IMR-90 (cell line): ENCODE measurements at regions of chr15 and their contacts with region 1.

Region 1: GRCh38 chr15:29589406-29589805 is 232.9 kb downstream of the TJP1 start:
- DNase-seq: no peak
- ATAC-seq: no peak
- H3K4me3 ChIP-seq: no peak overlapping the region
- H3K27ac ChIP-seq: no peak overlapping the region
- H3K4me1 ChIP-seq: no peaks in the 10 kb centered on the region
- H3K27me3 ChIP-seq: peaks cover 20% of the 10 kb centered on the region
- CTCF ChIP-seq: no peak
- POLR2A ChIP-seq: no peak
- RAD21 ChIP-seq: no peak

Region 2: DNA sequence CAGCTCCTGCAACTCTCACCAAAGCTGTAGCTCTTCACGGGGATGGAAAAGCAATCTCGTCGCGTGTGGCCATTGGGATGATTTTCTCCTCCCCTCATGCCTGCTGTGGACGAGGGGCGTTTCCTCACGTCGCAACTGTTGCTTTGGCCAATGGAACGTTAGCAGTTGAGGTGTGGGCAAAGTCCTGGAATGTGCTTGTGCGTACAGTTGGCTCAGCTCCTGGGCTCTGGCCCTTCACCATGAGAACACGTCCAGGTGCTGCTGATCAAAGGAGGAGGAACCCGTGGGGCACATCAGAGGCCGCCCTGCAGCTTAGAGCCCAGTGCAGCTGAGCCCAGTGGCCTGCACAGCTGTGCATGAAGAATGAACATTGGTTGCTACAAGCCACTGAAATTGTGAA is 46.7 kb after region 1 on chr15:
- CTCF ChIA-PET with region 1: no interaction called
- POLR2A ChIA-PET with region 1: no interaction called
- dilution Hi-C with region 1: no loop called
- in situ Hi-C with region 1: loop called (anchors 5 kb)
- intact Hi-C with region 1: loop called (anchors 10 kb)
- DNase-seq: no peak
- ATAC-seq: no peak
- H3K4me3 ChIP-seq: no peak overlapping the region
- H3K27ac ChIP-seq: no peak overlapping the region
- H3K4me1 ChIP-seq: no peaks in the 10 kb centered on the region
- H3K27me3 ChIP-seq: peaks cover 8% of the 10 kb centered on the region
- CTCF ChIP-seq: no peak
- POLR2A ChIP-seq: no peak
- RAD21 ChIP-seq: no peak

Region 3: GRCh38 chr15:29645841-29646240 is 56.4 kb after region 1 on chr15:
- CTCF ChIA-PET with region 1: no interaction called
- POLR2A ChIA-PET with region 1: no interaction called
- dilution Hi-C with region 1: no loop called
- in situ Hi-C with region 1: no loop called
- intact Hi-C with region 1: loop called (anchors 10 kb)
- DNase-seq: no peak
- ATAC-seq: no peak
- H3K4me3 ChIP-seq: no peak overlapping the region
- H3K27ac ChIP-seq: no peak overlapping the region
- H3K4me1 ChIP-seq: no peaks in the 10 kb centered on the region
- H3K27me3 ChIP-seq: no peaks in the 10 kb centered on the region
- CTCF ChIP-seq: no peak
- POLR2A ChIP-seq: no peak
- RAD21 ChIP-seq: no peak

Region 4: GRCh38 chr15:29704950-29705597 is 115.7 kb after region 1 on chr15:
- CTCF ChIA-PET with region 1: no interaction called
- POLR2A ChIA-PET with region 1: no interaction called
- dilution Hi-C with region 1: no loop called
- in situ Hi-C with region 1: no loop called
- intact Hi-C with region 1: no loop called
- DNase-seq: no peak
- ATAC-seq: no peak
- H3K4me3 ChIP-seq: no peak overlapping the region
- H3K27ac ChIP-seq: no peak overlapping the region
- H3K4me1 ChIP-seq: no peaks in the 10 kb centered on the region
- H3K27me3 ChIP-seq: no peaks in the 10 kb centered on the region
- CTCF ChIP-seq: no peak
- POLR2A ChIP-seq: no peak
- RAD21 ChIP-seq: no peak

Region 5: GRCh38 chr15:29844284-29844913 is 255.0 kb after region 1 on chr15:
- CTCF ChIA-PET with region 1: no interaction called
- POLR2A ChIA-PET with region 1: no interaction called
- dilution Hi-C with region 1: no loop called
- in situ Hi-C with region 1: no loop called
- intact Hi-C with region 1: no loop called
- DNase-seq: peak; percentile 76
- ATAC-seq: peak; percentile 29
- H3K4me3 ChIP-seq: no peak overlapping the region
- H3K27ac ChIP-seq: no peak overlapping the region
- H3K4me1 ChIP-seq: peaks cover 13% of the 10 kb centered on the region
- H3K27me3 ChIP-seq: no peaks in the 10 kb centered on the region
- CTCF ChIP-seq: no peak
- POLR2A ChIP-seq: no peak
- RAD21 ChIP-seq: no peak